ENCODE measurements at regions of chr4 and their contacts with region 1.

Region 1: GRCh38 chr4:126627255-126627654 is 1005.5 kb upstream of the INTU start:
- DNase-seq: peak; percentile 63
- H3K4me3 Mint-ChIP-seq: no peak overlapping the region
- H3K27ac Mint-ChIP-seq: no peak overlapping the region
- H3K4me1 Mint-ChIP-seq: no peaks in the 10 kb centered on the region
- H3K27me3 Mint-ChIP-seq: no peaks in the 10 kb centered on the region
- CTCF ChIP-seq: peak; percentile 60

Region 2: DNA sequence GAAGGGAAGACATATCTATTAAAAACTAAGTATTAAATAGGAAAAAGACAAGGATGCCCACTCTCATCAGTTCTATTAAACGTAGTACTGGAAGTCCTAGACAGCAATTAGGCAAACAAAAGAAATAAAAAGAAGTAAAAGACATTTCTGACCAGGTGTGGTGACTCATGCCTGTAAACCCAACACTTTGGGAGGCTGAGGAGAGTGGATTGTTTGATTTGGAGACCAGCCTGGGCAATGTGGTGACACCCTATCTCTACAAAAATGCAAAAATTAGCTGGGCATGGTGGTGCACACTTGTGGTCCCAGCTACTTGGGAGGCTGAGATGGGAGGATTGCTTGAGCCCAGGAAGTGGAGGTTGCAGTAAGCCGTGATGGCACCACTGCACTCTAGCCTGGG is 240.7 kb before region 1 on chr4:
- CTCF ChIA-PET with region 1: no interaction called
- POLR2A ChIA-PET with region 1: no interaction called
- intact Hi-C with region 1: no loop called
- DNase-seq: peak; percentile 47
- H3K4me3 Mint-ChIP-seq: no peak overlapping the region
- H3K27ac Mint-ChIP-seq: no peak overlapping the region
- H3K4me1 Mint-ChIP-seq: no peaks in the 10 kb centered on the region
- H3K27me3 Mint-ChIP-seq: no peaks in the 10 kb centered on the region
- CTCF ChIP-seq: no peak

Region 3: DNA sequence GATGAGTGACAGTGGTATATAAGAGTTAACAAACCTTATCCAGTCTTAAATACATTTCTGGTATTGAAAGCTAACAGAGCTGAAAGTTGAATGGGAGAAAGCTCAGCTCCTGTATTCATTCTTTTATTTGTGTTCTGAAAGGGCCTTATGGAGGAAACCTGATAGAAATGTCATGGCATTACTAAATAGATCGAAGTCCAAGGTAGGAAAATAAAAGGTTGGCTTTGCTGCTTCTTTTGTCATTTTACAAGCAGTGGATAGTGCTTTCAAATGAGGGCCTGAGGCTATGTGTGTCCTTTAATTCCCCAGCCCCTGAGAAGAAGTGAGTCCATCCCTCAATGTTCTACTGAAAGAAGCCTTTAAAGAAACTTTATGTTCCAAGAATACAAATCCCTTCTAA is 31.2 kb after region 1 on chr4:
- CTCF ChIA-PET with region 1: no interaction called
- POLR2A ChIA-PET with region 1: no interaction called
- intact Hi-C with region 1: no loop called
- DNase-seq: no peak
- H3K4me3 Mint-ChIP-seq: no peak overlapping the region
- H3K27ac Mint-ChIP-seq: no peak overlapping the region
- H3K4me1 Mint-ChIP-seq: no peaks in the 10 kb centered on the region
- H3K27me3 Mint-ChIP-seq: no peaks in the 10 kb centered on the region
- CTCF ChIP-seq: no peak

Region 4: GRCh38 chr4:126957556-126957955 is 330.3 kb after region 1 on chr4:
- CTCF ChIA-PET with region 1: interaction called, 5 read pairs
- POLR2A ChIA-PET with region 1: no interaction called
- intact Hi-C with region 1: loop called (anchors 1 kb)
- DNase-seq: peak; percentile 26
- H3K4me3 Mint-ChIP-seq: no peak overlapping the region
- H3K27ac Mint-ChIP-seq: no peak overlapping the region
- H3K4me1 Mint-ChIP-seq: no peaks in the 10 kb centered on the region
- H3K27me3 Mint-ChIP-seq: no peaks in the 10 kb centered on the region
- CTCF ChIP-seq: peak; percentile 29

Region 5: DNA sequence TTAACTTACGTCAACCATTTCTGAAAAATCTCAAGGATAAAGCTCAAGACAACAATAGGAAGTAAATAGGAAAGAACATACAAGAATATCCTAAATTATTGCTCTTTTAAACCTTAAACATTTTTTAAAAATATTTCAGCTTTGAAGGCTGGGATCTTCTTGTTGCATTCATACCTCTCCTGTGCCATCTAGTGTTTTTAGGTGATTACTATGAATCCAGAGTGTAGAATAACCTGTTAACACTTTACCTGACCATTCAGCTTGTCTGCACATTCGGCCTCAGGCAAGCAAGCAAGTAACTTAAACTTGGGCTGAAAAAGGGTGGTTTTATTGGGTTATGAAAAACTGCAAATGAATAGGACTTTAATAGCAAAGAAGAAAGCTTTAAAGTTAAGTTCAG is 497.7 kb after region 1 on chr4:
- CTCF ChIA-PET with region 1: interaction called, 3 read pairs
- POLR2A ChIA-PET with region 1: no interaction called
- intact Hi-C with region 1: loop called (anchors 1 kb)
- DNase-seq: peak; percentile 16
- H3K4me3 Mint-ChIP-seq: no peak overlapping the region
- H3K27ac Mint-ChIP-seq: no peak overlapping the region
- H3K4me1 Mint-ChIP-seq: no peaks in the 10 kb centered on the region
- H3K27me3 Mint-ChIP-seq: no peaks in the 10 kb centered on the region
- CTCF ChIP-seq: peak; percentile 26

Region 6: GRCh38 chr4:127400731-127401346 is 773.6 kb after region 1 on chr4:
- CTCF ChIA-PET with region 1: interaction called, 9 read pairs
- POLR2A ChIA-PET with region 1: no interaction called
- intact Hi-C with region 1: loop called (anchors 1 kb)
- DNase-seq: peak; percentile 82
- H3K4me3 Mint-ChIP-seq: no peak overlapping the region
- H3K27ac Mint-ChIP-seq: no peak overlapping the region
- H3K4me1 Mint-ChIP-seq: no peaks in the 10 kb centered on the region
- H3K27me3 Mint-ChIP-seq: no peaks in the 10 kb centered on the region
- CTCF ChIP-seq: peak; percentile 85

Region 7: DNA sequence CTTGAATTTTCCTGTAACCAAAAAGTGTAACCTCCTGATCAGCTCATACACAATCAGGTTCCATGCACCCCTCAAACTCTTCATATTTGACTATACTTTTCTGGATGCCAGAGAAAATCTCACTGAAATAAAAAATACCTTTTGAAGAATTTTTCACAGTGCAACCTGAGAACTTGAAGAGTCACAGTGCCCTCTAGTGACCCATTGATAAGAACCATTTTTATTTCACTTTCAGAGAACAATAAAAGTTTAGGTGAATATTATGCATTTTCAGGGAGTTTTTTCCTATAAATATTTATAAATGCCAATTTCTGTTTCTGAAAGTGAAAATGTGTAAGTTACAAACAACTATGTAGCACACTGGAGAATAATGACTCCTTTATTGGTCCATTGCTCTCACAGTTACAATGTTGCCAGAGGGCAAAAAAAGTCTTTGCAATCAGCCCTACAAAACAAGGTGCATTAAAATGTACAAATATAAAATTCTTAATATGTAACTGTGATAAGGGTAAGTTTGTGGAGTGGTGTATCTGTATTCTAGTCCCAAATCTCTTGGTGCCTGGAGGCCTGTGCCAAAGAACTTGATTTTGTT is 851.9 kb after region 1 on chr4:
- CTCF ChIA-PET with region 1: no interaction called
- POLR2A ChIA-PET with region 1: no interaction called
- intact Hi-C with region 1: loop called (anchors 5 kb)
- DNase-seq: peak; percentile 58
- H3K4me3 Mint-ChIP-seq: no peak overlapping the region
- H3K27ac Mint-ChIP-seq: no peak overlapping the region
- H3K4me1 Mint-ChIP-seq: no peaks in the 10 kb centered on the region
- H3K27me3 Mint-ChIP-seq: no peaks in the 10 kb centered on the region
- CTCF ChIP-seq: peak; percentile 79